ENCODE measurements at regions of chr5 and their contacts with region 1.

Region 1: GRCh38 chr5:126736141-126736540 is 40.8 kb upstream of the LMNB1 start:
- DNase-seq: peak; percentile 4 to 75
- H3K4me3 ChIP-seq: no peak overlapping the region
- H3K27ac ChIP-seq: no peak overlapping the region
- H3K4me1 ChIP-seq: peaks cover 9% of the 10 kb centered on the region; the same call in 1 of the 2 replicates
- H3K27me3 ChIP-seq: 0 out of 2 replicates have a peak, but pooled peaks cover 4% of the 10 kb centered on the region
- CTCF ChIP-seq: no peak

Region 2: GRCh38 chr5:126610160-126610559 is 126.0 kb before region 1 on chr5:
- CTCF ChIA-PET with region 1: interaction called, 15 read pairs
- POLR2A ChIA-PET with region 1: no interaction called
- intact Hi-C with region 1: no loop called
- DNase-seq: no peak
- H3K4me3 ChIP-seq: no peak overlapping the region
- H3K27ac ChIP-seq: no peak overlapping the region
- H3K4me1 ChIP-seq: no peaks in the 10 kb centered on the region
- H3K27me3 ChIP-seq: no peaks in the 10 kb centered on the region
- CTCF ChIP-seq: no peak

Region 3: DNA sequence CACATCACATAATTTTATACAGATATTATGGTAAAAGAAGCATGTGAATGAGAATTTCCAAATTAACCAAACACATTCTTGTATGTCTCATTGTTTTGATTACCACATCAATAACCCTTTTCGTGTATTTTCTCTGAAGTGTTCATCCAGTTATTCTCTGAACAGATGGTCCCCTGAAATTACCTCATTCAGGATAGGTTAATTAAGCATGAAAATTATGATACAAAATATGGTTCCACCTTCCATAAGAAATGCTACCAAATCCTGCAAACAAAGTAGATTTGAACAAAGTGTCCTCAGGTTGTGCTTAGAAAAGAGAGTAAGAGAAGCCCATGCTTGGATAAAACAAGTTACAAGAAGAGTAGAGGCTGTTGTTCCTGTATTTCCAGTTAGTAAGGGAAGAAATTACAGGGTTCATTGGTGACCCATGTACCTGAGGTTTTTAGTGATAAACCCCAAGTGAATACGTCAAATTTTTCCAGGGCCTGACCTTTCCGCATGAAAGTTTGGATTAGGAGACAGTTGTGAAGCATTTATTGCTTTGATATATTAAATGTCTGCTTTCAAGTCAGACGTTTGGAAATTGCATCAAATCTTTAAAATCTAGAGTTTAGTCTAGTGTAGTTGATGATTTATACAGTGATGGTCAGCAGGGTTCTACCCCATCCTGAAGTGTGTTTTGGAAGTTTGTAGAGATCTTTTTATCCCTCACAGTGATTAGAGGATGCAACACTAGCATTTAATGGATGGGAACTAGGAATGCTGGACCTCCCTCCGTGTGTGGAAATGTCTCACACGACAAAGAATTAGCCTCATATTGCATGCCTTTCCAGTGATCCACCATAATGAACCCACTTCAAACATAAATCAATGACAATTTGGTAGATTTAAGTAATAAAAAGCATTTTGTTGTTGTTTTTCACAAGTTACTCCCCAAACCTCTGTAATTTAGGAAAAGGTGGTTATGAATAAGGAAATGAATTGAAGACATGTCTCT is 42.0 kb before region 1 on chr5:
- CTCF ChIA-PET with region 1: no interaction called
- POLR2A ChIA-PET with region 1: no interaction called
- intact Hi-C with region 1: no loop called
- DNase-seq: peak in 1 of 2 experiments; percentile 36
- H3K4me3 ChIP-seq: no peak overlapping the region
- H3K27ac ChIP-seq: no peak overlapping the region
- H3K4me1 ChIP-seq: 0 out of 2 replicates have a peak, but pooled peaks cover 5% of the 10 kb centered on the region
- H3K27me3 ChIP-seq: no peaks in the 10 kb centered on the region
- CTCF ChIP-seq: no peak

Region 4: DNA sequence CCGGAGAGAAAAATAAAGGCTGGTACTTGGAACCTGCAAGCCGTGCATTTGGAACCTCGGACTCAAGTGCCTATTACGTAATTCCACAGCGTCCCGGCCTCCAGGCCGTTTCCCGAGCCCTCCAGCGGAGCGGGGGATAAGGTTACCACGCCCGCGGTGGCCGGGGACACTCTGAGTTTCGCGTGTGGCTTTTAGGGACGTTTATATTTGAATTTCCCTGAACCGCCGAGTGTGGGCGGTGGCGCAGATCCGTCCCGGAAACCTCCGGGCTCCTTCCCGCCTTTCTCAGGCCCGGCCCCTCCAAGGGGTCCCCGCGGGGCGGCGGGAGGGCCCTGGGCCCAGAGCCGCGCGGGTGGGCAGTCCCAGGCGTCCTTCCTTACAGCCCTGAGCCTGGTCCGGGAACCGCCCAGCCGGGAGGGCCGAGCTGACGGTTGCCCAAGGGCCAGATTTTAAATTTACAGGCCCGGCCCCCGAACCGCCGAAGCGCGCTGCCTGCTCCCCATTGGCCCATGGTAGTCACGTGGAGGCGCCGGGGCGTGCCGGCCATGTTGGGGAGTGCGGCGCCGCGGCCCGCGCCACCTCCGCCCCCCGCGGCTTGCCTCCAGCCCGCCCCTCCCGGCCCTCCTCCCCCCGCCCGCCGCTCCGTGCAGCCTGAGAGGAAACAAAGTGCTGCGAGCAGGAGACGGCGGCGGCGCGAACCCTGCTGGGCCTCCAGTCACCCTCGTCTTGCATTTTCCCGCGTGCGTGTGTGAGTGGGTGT is 40.5 kb after region 1 on chr5 and contains the start of gene LMNB1:
- CTCF ChIA-PET with region 1: no interaction called
- POLR2A ChIA-PET with region 1: no interaction called
- intact Hi-C with region 1: no loop called
- DNase-seq: peak; percentile 88 to 97
- H3K4me3 ChIP-seq: peak within 1 kb of the TSS; percentile 83
- H3K27ac ChIP-seq: peak within 1 kb of the TSS; percentile 60
- H3K4me1 ChIP-seq: peaks cover 25% of the 10 kb centered on the region
- H3K27me3 ChIP-seq: no peaks in the 10 kb centered on the region
- CTCF ChIP-seq: no peak
- total RNA-seq, gene LMNB1: 103 and 117 TPM in 2 replicates